SK-N-SH (cell line): ENCODE measurements at regions of chr22 and their contacts with region 1.

Region 1: DNA sequence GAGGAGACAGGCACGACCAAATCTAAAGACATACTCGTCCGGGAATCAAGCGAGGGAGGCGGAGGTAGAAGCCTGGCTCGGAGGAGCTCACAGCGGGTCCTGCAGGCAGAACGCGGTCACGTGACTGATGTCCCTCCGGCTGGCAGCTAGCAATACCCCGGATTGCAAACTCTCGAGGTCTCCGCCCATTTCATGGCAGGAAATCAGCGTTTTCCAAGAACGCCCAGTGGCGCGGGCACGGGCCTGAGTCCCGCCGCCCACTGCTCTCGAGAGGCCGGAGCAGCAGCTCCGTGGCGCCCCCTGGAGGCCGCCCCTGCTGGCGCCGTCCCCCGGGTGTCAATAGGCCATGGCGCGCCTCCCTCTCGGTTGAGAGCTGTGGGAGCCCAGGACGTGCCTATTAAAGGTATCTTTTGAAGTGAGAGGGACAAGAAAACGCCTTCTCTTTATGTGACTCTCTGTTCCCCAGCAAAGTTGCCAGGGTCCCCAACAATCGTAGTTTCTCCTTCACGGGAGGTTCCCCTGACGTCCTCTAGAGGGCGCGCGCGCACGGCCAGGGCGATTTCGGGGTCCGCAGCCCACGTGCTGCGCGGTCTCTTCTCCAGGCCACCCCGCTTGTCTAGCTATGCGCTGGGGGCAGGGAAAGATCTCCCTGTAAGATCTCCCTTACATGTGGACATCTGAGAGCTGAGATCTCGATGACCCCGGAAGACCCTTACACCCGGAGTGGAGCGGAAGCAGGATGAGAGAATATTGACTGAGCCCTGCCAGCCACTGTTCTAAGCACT is 37.3 kb upstream of the RBFOX2 start:
- DNase-seq: peak; percentile 91
- H3K4me3 ChIP-seq: peak overlapping the region; percentile 47 to 63
- H3K27ac ChIP-seq: peak overlapping the region; percentile 62 to 92
- H3K4me1 ChIP-seq: peaks cover 4 to 20% of the 10 kb centered on the region in 2 experiments; a peak in 3 of 4 replicates
- H3K27me3 ChIP-seq: no peaks in the 10 kb centered on the region
- CTCF ChIP-seq: peak; percentile 100
- EP300 ChIP-seq: peak in 1 of 2 experiments; percentile 5; a peak in 1 of 4 replicates
- RAD21 ChIP-seq: peak; percentile 78

Region 2: GRCh38 chr22:35601743-35602630 is 464.0 kb before region 1 on chr22:
- CTCF ChIA-PET with region 1: no interaction called
- POLR2A ChIA-PET with region 1: no interaction called
- DNase-seq: no peak
- H3K4me3 ChIP-seq: no peak overlapping the region
- H3K27ac ChIP-seq: no peak overlapping the region
- H3K4me1 ChIP-seq: peaks cover 0 to 27% of the 10 kb centered on the region in 2 experiments; a peak in 2 of 4 replicates
- H3K27me3 ChIP-seq: no peaks in the 10 kb centered on the region
- CTCF ChIP-seq: no peak
- EP300 ChIP-seq: no peak
- RAD21 ChIP-seq: no peak

Region 3: GRCh38 chr22:35627264-35628041 is 438.5 kb before region 1 on chr22:
- CTCF ChIA-PET with region 1: interaction called, 17 read pairs
- POLR2A ChIA-PET with region 1: no interaction called
- DNase-seq: peak; percentile 68
- H3K4me3 ChIP-seq: no peak overlapping the region
- H3K27ac ChIP-seq: peak overlapping the region in 1 of 2 experiments; percentile 53; a peak in 2 of 4 replicates
- H3K4me1 ChIP-seq: peaks cover 15 to 19% of the 10 kb centered on the region in 2 experiments; a peak in 1 of 4 replicates
- H3K27me3 ChIP-seq: no peaks in the 10 kb centered on the region
- CTCF ChIP-seq: peak; percentile 52
- EP300 ChIP-seq: no peak
- RAD21 ChIP-seq: peak; percentile 78

Region 4: GRCh38 chr22:35938226-35938625 is 127.7 kb before region 1 on chr22:
- CTCF ChIA-PET with region 1: interaction called, 91 read pairs
- POLR2A ChIA-PET with region 1: no interaction called
- DNase-seq: no peak
- H3K4me3 ChIP-seq: no peak overlapping the region
- H3K27ac ChIP-seq: peak overlapping the region in 1 of 2 experiments; percentile 81; a peak in 2 of 4 replicates
- H3K4me1 ChIP-seq: peaks cover 0 to 42% of the 10 kb centered on the region in 2 experiments; a peak in 3 of 4 replicates
- H3K27me3 ChIP-seq: no peaks in the 10 kb centered on the region
- CTCF ChIP-seq: no peak
- EP300 ChIP-seq: no peak
- RAD21 ChIP-seq: no peak

Region 5: DNA sequence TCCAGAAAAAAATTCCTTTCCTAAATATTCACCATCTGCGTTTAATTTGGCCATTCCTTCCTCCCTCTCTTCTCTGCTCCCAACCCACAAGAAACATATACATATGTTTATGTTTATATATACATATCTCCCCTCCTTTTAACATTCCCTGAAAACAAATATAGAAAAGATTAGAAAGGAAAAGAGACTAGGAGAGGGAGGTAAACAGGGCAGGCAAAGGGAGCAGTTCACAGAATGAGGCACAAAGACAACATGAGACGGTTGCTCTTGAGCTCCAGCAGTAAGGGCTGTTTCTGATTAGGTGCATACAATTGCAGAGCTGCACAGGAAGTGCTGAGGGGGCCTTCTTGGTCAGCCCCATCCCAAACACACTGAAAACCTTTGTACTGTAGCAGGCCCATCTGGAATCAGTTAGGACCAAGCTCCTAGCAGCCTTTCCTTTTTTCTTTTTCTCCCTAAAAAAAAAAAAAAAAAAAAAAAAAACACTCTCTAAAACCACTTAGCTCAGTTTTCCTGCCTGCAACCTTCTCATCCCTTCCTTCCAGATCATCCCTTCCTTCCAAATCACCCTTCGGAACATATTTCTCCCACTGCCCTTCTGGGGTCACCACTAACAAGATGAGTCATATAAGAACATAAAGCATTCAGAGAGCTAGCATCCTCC is 94.4 kb before region 1 on chr22:
- CTCF ChIA-PET with region 1: interaction called, 51 read pairs
- POLR2A ChIA-PET with region 1: interaction called, 4 read pairs
- DNase-seq: peak; percentile 65
- H3K4me3 ChIP-seq: peak overlapping the region; percentile 19 to 45; a peak in 3 of 4 replicates
- H3K27ac ChIP-seq: peak overlapping the region; percentile 96 to 100
- H3K4me1 ChIP-seq: peaks cover 66 to 94% of the 10 kb centered on the region in 2 experiments
- H3K27me3 ChIP-seq: no peaks in the 10 kb centered on the region
- CTCF ChIP-seq: no peak
- EP300 ChIP-seq: peak; percentile 92
- RAD21 ChIP-seq: peak; percentile 38; the same call in 1 of the 2 replicates

Region 6: DNA sequence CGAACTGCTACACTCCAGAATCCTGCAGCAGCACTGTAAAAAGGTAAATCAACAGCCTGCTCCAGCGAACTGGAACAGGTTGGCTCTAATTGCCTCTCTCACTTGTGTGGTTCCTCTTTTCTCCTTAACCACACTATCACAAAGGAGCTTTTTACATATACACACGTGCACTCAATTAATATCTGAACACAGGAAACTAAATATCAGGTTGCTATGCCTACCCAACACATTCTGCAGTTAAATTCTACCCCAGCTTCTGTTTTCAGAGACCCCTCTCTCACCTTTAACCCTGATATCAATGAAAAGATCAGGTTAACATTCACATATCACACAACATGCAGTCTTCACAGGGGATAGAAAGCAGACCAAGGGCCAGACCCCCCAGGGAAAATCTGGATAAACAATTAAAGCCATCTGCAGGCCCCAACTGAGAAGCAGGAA is 48.3 kb before region 1 on chr22:
- CTCF ChIA-PET with region 1: interaction called, 110 read pairs
- POLR2A ChIA-PET with region 1: interaction called, 5 read pairs
- DNase-seq: peak; percentile 68
- H3K4me3 ChIP-seq: no peak overlapping the region
- H3K27ac ChIP-seq: peak overlapping the region; percentile 70 to 95; a peak in 3 of 4 replicates
- H3K4me1 ChIP-seq: peaks cover 47 to 54% of the 10 kb centered on the region in 2 experiments
- H3K27me3 ChIP-seq: no peaks in the 10 kb centered on the region
- CTCF ChIP-seq: no peak
- EP300 ChIP-seq: peak; percentile 13 to 97; a peak in 2 of 4 replicates
- RAD21 ChIP-seq: 0 out of 2 replicates have a peak, but pooled peaks have one; percentile 25

Region 7: GRCh38 chr22:36081023-36081431 is 15.1 kb after region 1 on chr22:
- CTCF ChIA-PET with region 1: interaction called, 73 read pairs
- POLR2A ChIA-PET with region 1: no interaction called
- DNase-seq: no peak
- H3K4me3 ChIP-seq: no peak overlapping the region
- H3K27ac ChIP-seq: peak overlapping the region in 1 of 2 experiments; percentile 80; a peak in 3 of 4 replicates
- H3K4me1 ChIP-seq: peaks cover 3% of the 10 kb centered on the region in 2 experiments; a peak in 1 of 4 replicates
- H3K27me3 ChIP-seq: no peaks in the 10 kb centered on the region
- CTCF ChIP-seq: no peak
- EP300 ChIP-seq: no peak
- RAD21 ChIP-seq: no peak

Region 8: DNA sequence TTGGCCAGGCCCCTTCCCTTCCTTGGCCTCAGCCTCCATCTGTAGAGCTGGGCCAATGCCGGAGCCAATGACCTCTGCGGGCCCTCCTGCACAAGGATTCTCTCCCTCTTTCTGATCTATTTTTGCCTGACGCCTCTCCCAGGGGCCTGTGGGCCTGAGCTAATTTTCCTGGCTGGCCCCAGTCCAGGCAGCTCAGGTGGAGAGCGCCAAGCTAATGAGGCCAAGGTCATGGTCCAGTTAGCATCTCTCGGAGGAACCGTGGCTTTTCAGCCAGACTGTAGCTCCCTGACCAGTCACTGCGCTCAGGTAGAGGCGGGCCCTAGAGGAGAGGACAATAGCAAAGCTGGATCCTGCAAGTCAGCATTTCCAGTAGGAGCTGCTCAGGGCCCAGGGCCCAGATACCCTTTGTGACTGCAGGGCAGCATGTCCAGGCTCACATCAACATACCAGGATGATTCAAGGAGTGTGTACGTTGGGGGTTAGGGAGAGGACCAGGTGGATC is 51.1 kb after region 1 on chr22:
- CTCF ChIA-PET with region 1: interaction called, 53 read pairs
- POLR2A ChIA-PET with region 1: no interaction called
- DNase-seq: no peak
- H3K4me3 ChIP-seq: no peak overlapping the region
- H3K27ac ChIP-seq: no peak overlapping the region
- H3K4me1 ChIP-seq: no peaks in the 10 kb centered on the region
- H3K27me3 ChIP-seq: no peaks in the 10 kb centered on the region
- CTCF ChIP-seq: no peak
- EP300 ChIP-seq: no peak
- RAD21 ChIP-seq: no peak